PC-9 (cell line): ENCODE measurements at regions of chr1 and their contacts with region 1.

Region 1: DNA sequence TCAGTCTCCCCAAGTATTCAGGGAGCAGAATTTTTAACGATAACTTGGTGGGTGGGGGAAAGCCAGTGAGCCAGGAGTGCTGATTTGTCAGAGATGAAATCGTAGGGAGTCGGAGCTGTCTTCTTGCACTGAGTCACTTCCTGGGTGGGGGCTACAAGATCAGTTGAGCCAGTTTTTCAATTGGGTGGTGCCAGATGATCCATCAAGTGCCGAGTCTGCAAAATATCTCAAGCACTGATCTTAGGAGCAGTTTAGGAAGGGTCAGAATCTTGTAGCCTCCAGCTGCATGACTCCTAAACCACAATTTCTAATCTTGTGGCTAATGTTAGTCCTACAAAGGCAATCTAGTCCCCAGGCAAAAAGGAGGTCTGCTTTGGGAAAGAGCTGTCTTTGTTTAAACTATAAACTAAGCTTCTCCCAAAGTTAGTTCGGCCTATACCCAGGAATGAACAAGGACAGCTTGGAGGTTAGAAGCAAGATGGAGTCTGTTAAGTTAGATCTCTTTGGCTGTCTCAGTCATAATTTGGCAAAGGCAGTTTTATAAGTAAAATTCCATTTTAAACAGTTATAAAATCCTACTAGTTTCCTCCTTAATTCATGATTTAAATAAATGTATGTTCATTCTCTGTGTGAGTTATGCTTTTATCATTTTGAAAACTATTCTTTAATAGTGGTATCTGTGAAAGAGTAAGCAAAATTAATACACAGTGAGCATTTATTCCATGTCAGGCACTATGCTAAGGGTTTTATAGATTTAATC is 51.7 kb downstream of the SLC16A1 start:
- DNase-seq: peak; percentile 72 to 99
- H3K4me3 ChIP-seq: peak overlapping the region; percentile 33; the same call in 1 of the 2 replicates
- H3K27ac ChIP-seq: peak overlapping the region; percentile 84
- H3K4me1 ChIP-seq: peaks cover 65% of the 10 kb centered on the region
- H3K27me3 ChIP-seq: no peaks in the 10 kb centered on the region
- CTCF ChIP-seq: no peak

Region 2: DNA sequence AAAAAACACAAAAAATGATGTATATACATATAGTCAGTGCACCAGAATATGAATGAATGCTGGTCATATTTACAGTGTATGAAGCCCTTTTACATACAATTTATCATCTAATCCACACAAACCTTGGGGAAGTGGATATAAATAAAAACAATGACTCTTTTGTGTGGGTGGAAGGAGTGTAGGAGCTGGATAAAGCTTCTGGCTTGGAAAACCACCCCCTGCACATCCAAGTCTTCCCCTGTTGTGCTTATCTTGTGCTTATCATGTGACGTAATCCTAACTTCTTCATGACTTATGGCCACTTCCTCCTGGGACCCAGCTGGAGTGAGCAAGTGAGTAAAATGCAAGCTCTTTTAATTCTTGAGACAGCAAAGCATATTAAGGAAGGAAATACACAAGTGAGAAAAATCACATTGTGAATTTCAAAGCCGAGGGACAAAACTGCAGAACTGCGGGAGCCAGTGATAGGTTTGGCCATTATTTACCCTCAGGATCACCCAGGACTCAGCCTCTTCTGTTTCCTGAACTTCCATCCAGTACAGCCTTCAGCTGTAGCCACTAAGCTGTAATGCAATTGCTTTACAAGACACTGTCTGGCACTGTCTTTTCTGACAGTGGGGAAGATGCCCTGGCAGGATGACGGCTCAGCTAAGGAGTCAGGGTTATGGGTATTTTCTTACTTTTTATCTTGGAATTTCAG is 85.1 kb before region 1 on chr1:
- CTCF ChIA-PET with region 1: interaction called, 11 read pairs
- POLR2A ChIA-PET with region 1: no interaction called
- intact Hi-C with region 1: no loop called
- DNase-seq: peak in 1 of 2 experiments; percentile 58
- H3K4me3 ChIP-seq: no peak overlapping the region
- H3K27ac ChIP-seq: no peak overlapping the region
- H3K4me1 ChIP-seq: peaks cover 15% of the 10 kb centered on the region
- H3K27me3 ChIP-seq: no peaks in the 10 kb centered on the region
- CTCF ChIP-seq: no peak

Region 3: DNA sequence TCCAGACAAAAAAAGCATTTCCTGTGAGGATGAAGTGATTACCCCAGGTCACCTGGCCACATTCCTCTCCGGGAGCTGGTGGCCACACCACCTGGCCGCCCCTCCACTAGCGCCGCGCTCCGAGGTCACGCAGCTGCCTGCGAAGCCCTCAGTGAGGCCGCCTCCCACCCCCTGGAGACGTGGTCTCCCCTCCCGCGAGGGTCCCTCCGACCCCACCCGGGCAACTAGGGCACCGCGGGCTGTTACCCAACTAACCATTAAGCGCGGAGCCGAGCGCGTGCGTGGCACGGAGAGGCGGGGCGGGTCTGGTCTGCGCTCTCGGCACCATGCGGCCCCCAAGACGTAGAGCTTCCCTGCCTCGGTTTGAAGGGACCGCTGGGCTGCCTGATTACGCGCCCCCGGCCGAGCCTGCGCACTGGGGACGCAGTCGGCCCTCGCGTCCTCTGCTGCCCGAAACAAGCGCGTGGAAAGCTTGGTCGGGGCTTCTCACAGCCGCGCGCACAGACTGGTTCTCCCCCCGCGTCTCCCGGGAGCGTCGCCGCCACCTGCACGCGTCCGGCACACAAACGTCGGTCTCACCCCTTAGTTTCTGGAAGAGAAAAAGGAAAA is 54.7 kb before region 1 on chr1:
- CTCF ChIA-PET with region 1: no interaction called
- POLR2A ChIA-PET with region 1: interaction called, 15 read pairs
- intact Hi-C with region 1: no loop called
- DNase-seq: peak; percentile 69 to 77
- H3K4me3 ChIP-seq: peak overlapping the region; percentile 73
- H3K27ac ChIP-seq: peak overlapping the region; percentile 88
- H3K4me1 ChIP-seq: peaks cover 43% of the 10 kb centered on the region
- H3K27me3 ChIP-seq: no peaks in the 10 kb centered on the region
- CTCF ChIP-seq: no peak

Region 4: GRCh38 chr1:112935461-112936289 is 31.4 kb after region 1 on chr1:
- CTCF ChIA-PET with region 1: no interaction called
- POLR2A ChIA-PET with region 1: interaction called, 11 read pairs
- intact Hi-C with region 1: loop called (anchors 2 kb)
- DNase-seq: peak in 1 of 2 experiments; percentile 56
- H3K4me3 ChIP-seq: peak overlapping the region; percentile 20; the same call in 1 of the 2 replicates
- H3K27ac ChIP-seq: peak overlapping the region; percentile 93
- H3K4me1 ChIP-seq: peaks cover 39% of the 10 kb centered on the region
- H3K27me3 ChIP-seq: no peaks in the 10 kb centered on the region
- CTCF ChIP-seq: no peak